CD4-positive, alpha-beta T cell (primary cell): ENCODE measurements at regions of chr5 and their contacts with region 1.

Region 1: DNA sequence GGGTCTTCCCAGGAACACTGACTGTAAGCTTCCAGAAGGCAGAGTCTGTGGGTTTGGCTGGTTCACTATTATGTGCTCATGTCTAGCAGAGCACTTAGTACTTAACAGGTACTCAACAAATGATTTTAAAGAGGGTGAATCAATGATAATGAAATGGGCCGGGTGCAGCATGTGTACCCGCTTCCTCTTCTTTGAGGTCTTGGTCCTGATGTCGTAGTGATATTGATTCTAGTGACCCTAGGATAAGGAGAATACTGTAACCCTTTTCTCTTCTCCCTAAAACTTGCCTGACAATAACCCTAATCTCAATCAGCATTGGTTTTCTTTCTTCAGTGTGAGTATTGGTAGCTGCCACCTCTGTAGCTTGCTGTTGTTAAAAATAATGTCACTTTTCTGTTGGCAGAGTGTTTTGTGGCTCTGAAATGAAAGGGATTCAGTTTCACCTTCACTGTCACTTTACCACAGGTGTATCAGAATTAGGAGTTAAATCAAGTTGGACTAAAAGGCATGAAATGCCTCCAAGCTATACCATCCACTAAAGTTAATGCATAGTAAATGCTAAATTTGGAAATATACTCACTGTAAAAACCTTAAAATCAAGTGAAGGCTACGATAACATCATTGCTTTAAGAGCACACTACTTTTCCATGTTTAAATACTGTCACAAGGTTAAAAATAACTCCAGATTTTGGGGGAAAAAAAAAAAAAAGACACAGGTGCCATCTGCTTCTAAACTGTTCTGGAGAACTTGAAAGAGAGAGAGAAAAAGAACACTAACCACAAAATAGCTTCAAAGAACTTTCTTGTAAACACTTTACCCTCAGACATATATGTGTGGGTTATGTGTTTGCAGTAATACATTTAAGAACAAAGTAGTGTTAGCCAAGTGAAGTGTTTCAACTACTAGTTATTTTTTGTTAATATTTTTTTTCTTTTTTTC is 6.0 kb downstream of the CAMK4 start:
- DNase-seq: peak in 3 of 14 experiments; percentile 72 to 86 (median 80)
- ATAC-seq: peak; percentile 36
- H3K4me3 ChIP-seq: peak overlapping the region; percentile 96
- H3K4me3 Mint-ChIP-seq: peak overlapping the region; percentile 79
- H3K27ac ChIP-seq: peak overlapping the region; percentile 79
- H3K27ac Mint-ChIP-seq: peak overlapping the region; percentile 90
- H3K4me1 ChIP-seq: peaks cover 47% of the 10 kb centered on the region
- H3K4me1 Mint-ChIP-seq: peaks cover 86% of the 10 kb centered on the region
- H3K27me3 ChIP-seq: no peaks in the 10 kb centered on the region
- H3K27me3 Mint-ChIP-seq: no peaks in the 10 kb centered on the region
- CTCF ChIP-seq: no peak

Region 2: GRCh38 chr5:110977915-110978314 is 252.2 kb before region 1 on chr5:
- CTCF ChIA-PET with region 1: no interaction called
- POLR2A ChIA-PET with region 1: no interaction called
- intact Hi-C with region 1: no loop called
- DNase-seq: no peak
- ATAC-seq: no peak
- H3K4me3 ChIP-seq: no peak overlapping the region
- H3K4me3 Mint-ChIP-seq: no peak overlapping the region
- H3K27ac ChIP-seq: no peak overlapping the region
- H3K27ac Mint-ChIP-seq: no peak overlapping the region
- H3K4me1 ChIP-seq: no peaks in the 10 kb centered on the region
- H3K4me1 Mint-ChIP-seq: no peaks in the 10 kb centered on the region
- H3K27me3 ChIP-seq: no peaks in the 10 kb centered on the region
- H3K27me3 Mint-ChIP-seq: peaks cover 6% of the 10 kb centered on the region
- CTCF ChIP-seq: no peak

Region 3: DNA sequence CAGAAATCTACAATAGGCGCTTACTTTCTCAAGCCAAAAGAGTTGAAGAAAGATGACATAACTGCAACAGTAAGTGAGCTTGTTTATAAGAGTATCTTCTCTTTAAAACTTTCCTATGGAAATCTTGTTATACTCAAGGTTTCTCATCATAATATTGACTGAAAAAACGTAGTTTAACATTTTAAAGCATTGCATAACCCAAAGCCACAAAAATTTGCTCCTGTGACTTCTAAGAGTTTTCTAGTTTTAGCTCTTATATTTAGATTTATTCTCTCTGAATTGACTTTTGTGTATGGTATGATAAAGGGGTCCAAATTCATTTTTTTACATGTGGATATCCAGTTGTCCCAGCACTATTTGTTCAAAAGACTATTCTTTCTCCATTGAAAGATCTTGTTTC is 122.8 kb before region 1 on chr5:
- CTCF ChIA-PET with region 1: no interaction called
- POLR2A ChIA-PET with region 1: no interaction called
- intact Hi-C with region 1: no loop called
- DNase-seq: no peak
- ATAC-seq: no peak
- H3K4me3 ChIP-seq: no peak overlapping the region
- H3K4me3 Mint-ChIP-seq: no peak overlapping the region
- H3K27ac ChIP-seq: no peak overlapping the region
- H3K27ac Mint-ChIP-seq: no peak overlapping the region
- H3K4me1 ChIP-seq: no peaks in the 10 kb centered on the region
- H3K4me1 Mint-ChIP-seq: no peaks in the 10 kb centered on the region
- H3K27me3 ChIP-seq: no peaks in the 10 kb centered on the region
- H3K27me3 Mint-ChIP-seq: no peaks in the 10 kb centered on the region
- CTCF ChIP-seq: no peak

Region 4: DNA sequence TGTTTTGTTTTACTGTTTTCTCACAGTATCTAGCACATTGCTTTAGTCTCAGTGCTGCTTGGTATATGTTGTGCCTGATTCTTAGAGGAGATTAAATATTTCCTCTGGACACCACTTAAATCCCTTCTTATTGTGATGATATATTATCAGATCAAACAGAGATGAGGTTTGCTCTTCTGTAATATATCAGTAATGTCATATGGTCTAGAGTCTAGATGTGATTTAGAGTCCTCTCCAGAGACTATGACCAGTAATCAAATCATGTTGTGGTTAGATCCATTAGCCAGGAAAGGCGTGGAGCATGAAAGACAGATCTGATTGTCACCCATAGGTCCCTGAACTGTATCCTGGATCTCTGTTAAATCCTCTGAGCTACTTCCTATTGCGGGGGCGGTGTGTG is 18.4 kb after region 1 on chr5:
- CTCF ChIA-PET with region 1: interaction called, 36 read pairs
- POLR2A ChIA-PET with region 1: interaction called, 196 read pairs
- intact Hi-C with region 1: loop called (anchors 2 kb)
- DNase-seq: no peak
- ATAC-seq: no peak
- H3K4me3 ChIP-seq: no peak overlapping the region
- H3K4me3 Mint-ChIP-seq: peak overlapping the region; percentile 53
- H3K27ac ChIP-seq: no peak overlapping the region
- H3K27ac Mint-ChIP-seq: peak overlapping the region; percentile 81
- H3K4me1 ChIP-seq: peaks cover 31% of the 10 kb centered on the region
- H3K4me1 Mint-ChIP-seq: peaks cover 86% of the 10 kb centered on the region
- H3K27me3 ChIP-seq: no peaks in the 10 kb centered on the region
- H3K27me3 Mint-ChIP-seq: no peaks in the 10 kb centered on the region
- CTCF ChIP-seq: no peak

Region 5: GRCh38 chr5:111254613-111255012 is 24.5 kb after region 1 on chr5:
- CTCF ChIA-PET with region 1: interaction called, 36 read pairs
- POLR2A ChIA-PET with region 1: interaction called, 39 read pairs
- intact Hi-C with region 1: loop called (anchors 2 kb)
- DNase-seq: peak in 9 of 14 experiments; percentile 17 to 93 (median 51)
- ATAC-seq: peak; percentile 80
- H3K4me3 ChIP-seq: no peak overlapping the region
- H3K4me3 Mint-ChIP-seq: peak overlapping the region; percentile 72
- H3K27ac ChIP-seq: peak overlapping the region; percentile 62 to 68
- H3K27ac Mint-ChIP-seq: peak overlapping the region; percentile 87
- H3K4me1 ChIP-seq: peaks cover 44% of the 10 kb centered on the region
- H3K4me1 Mint-ChIP-seq: peaks cover 67% of the 10 kb centered on the region
- H3K27me3 ChIP-seq: no peaks in the 10 kb centered on the region
- H3K27me3 Mint-ChIP-seq: no peaks in the 10 kb centered on the region
- CTCF ChIP-seq: no peak